IMR-90 (cell line): ENCODE measurements at regions of chr17 and their contacts with region 1.

Region 1: DNA sequence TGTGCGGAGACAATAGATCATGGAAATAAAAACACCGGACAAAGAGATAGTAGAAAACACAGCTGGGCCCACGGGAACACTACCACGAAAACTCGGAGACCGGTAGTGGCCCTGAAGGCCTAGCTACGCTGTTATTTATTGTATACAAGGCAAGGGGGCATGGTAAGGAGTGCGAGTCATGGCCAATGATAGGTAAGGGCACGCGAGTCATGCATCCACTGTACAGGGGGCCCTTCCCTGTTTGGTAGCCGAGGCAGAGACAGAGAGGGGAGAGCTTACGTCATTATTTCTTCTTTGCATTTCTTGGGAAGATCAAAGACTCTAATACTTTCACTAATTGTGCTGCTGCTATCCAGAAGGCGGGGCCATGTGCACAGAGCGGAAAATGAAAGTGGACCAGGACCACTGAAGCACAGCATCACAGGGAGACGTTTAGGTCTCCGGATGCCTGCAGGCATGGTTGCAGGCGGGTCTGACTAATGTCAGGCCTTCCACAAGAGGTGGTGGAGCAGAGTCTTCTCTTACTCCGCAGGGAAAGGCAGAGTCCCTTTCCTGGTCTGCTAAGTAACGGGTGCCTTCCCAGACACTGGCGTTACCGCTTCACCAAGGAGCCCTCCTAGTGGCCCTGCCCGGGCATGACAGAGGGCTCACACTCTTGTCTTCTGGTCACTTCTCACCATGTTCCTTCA is 74.4 kb upstream of the ARL4D start:
- DNase-seq: no peak
- ATAC-seq: no peak
- H3K4me3 ChIP-seq: no peak overlapping the region
- H3K27ac ChIP-seq: no peak overlapping the region
- H3K4me1 ChIP-seq: peaks cover 7% of the 10 kb centered on the region
- H3K27me3 ChIP-seq: no peaks in the 10 kb centered on the region
- CTCF ChIP-seq: 0 out of 2 replicates have a peak, but pooled peaks have one; percentile 6
- POLR2A ChIP-seq: no peak
- RAD21 ChIP-seq: no peak

Region 2: GRCh38 chr17:42895185-42895555 is 429.2 kb before region 1 on chr17:
- CTCF ChIA-PET with region 1: no interaction called
- POLR2A ChIA-PET with region 1: no interaction called
- dilution Hi-C with region 1: no loop called
- in situ Hi-C with region 1: loop called (anchors 25 kb)
- intact Hi-C with region 1: no loop called
- DNase-seq: peak; percentile 90
- ATAC-seq: peak; percentile 66
- H3K4me3 ChIP-seq: no peak overlapping the region
- H3K27ac ChIP-seq: no peak overlapping the region
- H3K4me1 ChIP-seq: peaks cover 6% of the 10 kb centered on the region; the same call in 1 of the 2 replicates
- H3K27me3 ChIP-seq: peaks cover 12% of the 10 kb centered on the region
- CTCF ChIP-seq: no peak
- POLR2A ChIP-seq: no peak
- RAD21 ChIP-seq: no peak

Region 3: GRCh38 chr17:43211480-43212402 is 112.6 kb before region 1 on chr17 and contains the start of gene TMEM106A:
- CTCF ChIA-PET with region 1: no interaction called
- POLR2A ChIA-PET with region 1: interaction called, 12 read pairs
- dilution Hi-C with region 1: no loop called
- in situ Hi-C with region 1: loop called (anchors 25 kb)
- intact Hi-C with region 1: no loop called
- DNase-seq: peak; percentile 85
- ATAC-seq: peak; percentile 88
- H3K4me3 ChIP-seq: peak within 1 kb of the TSS; percentile 74
- H3K27ac ChIP-seq: peak within 1 kb of the TSS; percentile 84
- H3K4me1 ChIP-seq: peaks cover 16% of the 10 kb centered on the region
- H3K27me3 ChIP-seq: no peaks in the 10 kb centered on the region
- CTCF ChIP-seq: peak; percentile 30
- POLR2A ChIP-seq: peak; percentile 71
- RAD21 ChIP-seq: 0 out of 2 replicates have a peak, but pooled peaks have one; percentile 9
- total RNA-seq, gene TMEM106A: 1.4 and 2.2 TPM in 2 replicates